ENCODE measurements at regions of chr1 and their contacts with region 1.

Region 1: GRCh38 chr1:18681423-18681835 is 50.8 kb downstream of the PAX7 start:
- DNase-seq: no peak
- ATAC-seq: peak; percentile 68
- H3K4me3 Mint-ChIP-seq: no peak overlapping the region
- H3K27ac Mint-ChIP-seq: no peak overlapping the region
- H3K4me1 Mint-ChIP-seq: peaks cover 21% of the 10 kb centered on the region
- H3K27me3 Mint-ChIP-seq: peaks cover 59% of the 10 kb centered on the region
- CTCF ChIP-seq: peak; percentile 64; the same call in 1 of the 2 replicates

Region 2: DNA sequence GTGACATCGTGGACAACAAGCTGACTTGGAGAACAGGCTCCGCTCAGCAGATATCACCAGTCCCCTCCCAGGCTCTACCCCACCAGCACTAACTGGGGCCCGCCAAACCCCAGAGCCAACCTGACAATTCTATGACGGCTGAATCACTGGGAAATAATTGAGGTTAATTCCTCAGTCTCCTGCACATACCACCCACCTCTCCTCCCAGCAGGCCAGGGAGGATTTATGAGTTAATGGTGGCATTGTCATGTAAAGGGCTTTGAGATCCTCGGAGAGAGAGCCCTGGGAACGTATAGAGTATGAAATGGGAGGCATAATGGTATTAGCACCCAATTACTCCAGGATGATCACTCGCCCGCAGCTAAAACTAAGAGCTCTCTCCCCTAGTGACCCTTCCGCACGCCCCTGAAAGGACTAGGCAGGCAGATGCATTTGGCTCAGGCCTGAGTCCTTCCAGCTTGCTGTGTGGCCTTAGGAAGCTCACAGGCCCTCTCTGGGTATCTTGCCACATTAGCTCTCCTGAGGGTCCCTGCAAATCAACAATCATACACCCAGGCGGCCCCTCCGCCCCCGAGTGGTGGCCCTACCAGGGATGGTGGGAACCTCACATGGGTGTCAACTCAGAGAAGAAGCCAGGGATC is 78.1 kb before region 1 on chr1:
- CTCF ChIA-PET with region 1: interaction called, 102 read pairs
- POLR2A ChIA-PET with region 1: no interaction called
- DNase-seq: no peak
- ATAC-seq: peak; percentile 40
- H3K4me3 Mint-ChIP-seq: no peak overlapping the region
- H3K27ac Mint-ChIP-seq: no peak overlapping the region
- H3K4me1 Mint-ChIP-seq: peaks cover 17% of the 10 kb centered on the region
- H3K27me3 Mint-ChIP-seq: peaks cover 9% of the 10 kb centered on the region
- CTCF ChIP-seq: no peak

Region 3: GRCh38 chr1:18693256-18694098 is 12.0 kb after region 1 on chr1:
- CTCF ChIA-PET with region 1: interaction called, 41 read pairs
- POLR2A ChIA-PET with region 1: interaction called, 3 read pairs
- DNase-seq: peak; percentile 89
- ATAC-seq: peak; percentile 95
- H3K4me3 Mint-ChIP-seq: peak overlapping the region; percentile 69
- H3K27ac Mint-ChIP-seq: 0 out of 2 replicates have a peak overlapping the region, but pooled peaks have one; percentile 41
- H3K4me1 Mint-ChIP-seq: peaks cover 16% of the 10 kb centered on the region
- H3K27me3 Mint-ChIP-seq: peaks cover 33% of the 10 kb centered on the region
- CTCF ChIP-seq: no peak

Region 4: DNA sequence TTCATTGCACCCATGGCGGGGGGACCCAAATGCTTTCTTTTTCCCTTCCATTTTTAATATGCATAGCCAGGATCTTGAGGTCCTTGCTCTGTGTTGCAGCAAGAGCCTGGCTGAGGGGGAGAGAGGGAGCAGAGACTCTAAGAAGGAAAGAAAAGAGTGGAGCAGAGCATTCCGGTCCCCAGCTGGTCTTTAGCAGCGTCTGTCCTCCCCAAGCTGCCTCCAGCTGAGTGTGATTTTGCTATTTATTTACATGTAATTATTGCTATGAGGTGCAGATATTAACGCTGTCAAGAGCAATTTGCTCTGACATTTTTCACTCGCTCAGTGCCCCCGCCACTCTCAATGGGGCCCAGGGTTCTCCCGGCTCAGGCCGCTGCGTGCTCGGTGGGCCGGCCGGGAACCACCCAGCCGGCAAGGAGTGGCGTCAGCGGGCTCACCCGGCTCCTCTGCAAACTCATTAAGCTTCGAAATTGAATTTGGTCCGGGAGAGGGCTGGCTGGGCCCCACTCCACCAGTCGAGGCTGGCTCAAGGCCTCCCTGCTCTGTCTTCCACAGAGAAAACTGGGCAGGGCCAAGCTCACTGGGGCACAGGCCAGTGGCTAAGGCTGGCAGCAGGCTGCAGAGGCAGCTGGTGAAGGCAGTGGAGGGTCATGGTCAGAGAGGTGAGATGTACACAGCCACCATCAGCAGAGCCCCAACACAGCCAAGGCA is 42.4 kb after region 1 on chr1:
- CTCF ChIA-PET with region 1: no interaction called
- POLR2A ChIA-PET with region 1: no interaction called
- DNase-seq: no peak
- ATAC-seq: no peak; the same call in 1 of the 2 replicates
- H3K4me3 Mint-ChIP-seq: no peak overlapping the region
- H3K27ac Mint-ChIP-seq: no peak overlapping the region
- H3K4me1 Mint-ChIP-seq: peaks cover 19% of the 10 kb centered on the region
- H3K27me3 Mint-ChIP-seq: peaks cover 39% of the 10 kb centered on the region
- CTCF ChIP-seq: no peak

Measured in WTC11 (cell line).